Activated CD4-positive, alpha-beta memory T cell treated with anti-CD3 and anti-CD28 coated beads, Interleukin-2, amount 10 ng/mL, durations not matched to agents 7 days and 5 days (primary cell): ENCODE measurements at regions of chr11 and their contacts with region 1.

Region 1: DNA sequence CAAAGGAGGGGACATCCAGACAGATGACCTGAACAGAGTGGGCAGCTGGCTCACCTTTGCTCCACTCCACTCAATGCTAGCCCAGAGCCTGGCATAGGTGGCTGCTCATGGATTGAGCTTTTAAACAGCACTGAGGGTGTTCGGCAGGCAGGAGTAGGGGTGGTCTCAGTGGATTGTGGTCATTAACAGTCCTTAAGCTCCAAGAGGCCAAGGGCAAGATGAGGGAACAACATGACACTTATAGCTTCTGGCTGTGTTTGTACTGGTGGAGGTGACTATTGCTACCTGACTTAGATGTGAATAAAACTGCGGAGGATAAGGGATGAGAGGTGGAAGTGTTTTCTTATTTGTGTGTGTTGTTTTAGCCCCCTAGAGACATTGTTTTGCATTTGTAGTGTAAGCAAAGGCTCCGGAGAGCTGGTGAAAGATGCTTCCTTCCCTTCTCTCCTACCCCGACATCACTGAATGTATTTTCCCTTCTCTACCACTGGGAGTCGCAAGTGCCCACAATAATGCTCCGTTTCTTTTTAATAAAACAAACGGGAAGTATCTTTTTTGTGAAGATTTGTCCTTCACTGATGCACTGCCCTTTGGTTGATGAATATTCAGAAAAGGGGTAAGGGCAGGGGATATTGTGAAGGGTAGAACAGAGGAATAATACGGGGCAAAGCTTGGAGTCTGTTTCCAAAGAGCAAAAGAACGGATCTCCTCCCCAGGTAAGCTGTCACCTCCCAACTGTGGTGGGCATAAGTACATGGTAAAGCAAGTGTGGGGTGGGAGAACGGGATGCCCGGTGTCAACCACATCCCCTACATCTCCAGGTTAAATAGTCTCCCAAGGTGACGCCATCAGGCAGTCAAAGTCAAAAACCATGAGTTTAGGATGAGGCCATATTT is 27.5 kb upstream of the MTNR1B start:
- DNase-seq: peak; percentile 19
- H3K4me3 Mint-ChIP-seq: no peak overlapping the region
- H3K27ac Mint-ChIP-seq: no peak overlapping the region
- H3K4me1 Mint-ChIP-seq: no peaks in the 10 kb centered on the region
- H3K27me3 Mint-ChIP-seq: peaks cover 4% of the 10 kb centered on the region

Region 2: GRCh38 chr11:93225662-93226061 is 283.7 kb after region 1 on chr11:
- CTCF ChIA-PET with region 1: interaction called, 24 read pairs
- POLR2A ChIA-PET with region 1: no interaction called
- DNase-seq: no peak
- H3K4me3 Mint-ChIP-seq: no peak overlapping the region
- H3K27ac Mint-ChIP-seq: no peak overlapping the region
- H3K4me1 Mint-ChIP-seq: no peaks in the 10 kb centered on the region
- H3K27me3 Mint-ChIP-seq: peaks cover 7% of the 10 kb centered on the region